ENCODE measurements at regions of chr15 and their contacts with region 1.

Region 1: GRCh38 chr15:91055548-91056331 is 33.3 kb upstream of the VPS33B start:
- DNase-seq: peak; percentile 64
- CTCF ChIP-seq: peak; percentile 77

Region 2: GRCh38 chr15:90869601-90870353 is 186.0 kb before region 1 on chr15:
- CTCF ChIA-PET with region 1: no interaction called
- POLR2A ChIA-PET with region 1: no interaction called
- DNase-seq: no peak
- CTCF ChIP-seq: no peak

Region 3: GRCh38 chr15:91032919-91033803 is 22.6 kb before region 1 on chr15:
- CTCF ChIA-PET with region 1: interaction called, 17 read pairs
- POLR2A ChIA-PET with region 1: no interaction called
- DNase-seq: peak; percentile 59
- CTCF ChIP-seq: peak; percentile 86

Region 4: GRCh38 chr15:91068966-91069365 is 13.2 kb after region 1 on chr15:
- CTCF ChIA-PET with region 1: interaction called, 20 read pairs
- POLR2A ChIA-PET with region 1: no interaction called
- DNase-seq: no peak
- CTCF ChIP-seq: no peak

Region 5: GRCh38 chr15:91110407-91110806 is 54.7 kb after region 1 on chr15:
- CTCF ChIA-PET with region 1: interaction called, 12 read pairs
- POLR2A ChIA-PET with region 1: no interaction called
- DNase-seq: no peak
- CTCF ChIP-seq: no peak

Region 6: GRCh38 chr15:91208371-91208770 is 152.6 kb after region 1 on chr15:
- CTCF ChIA-PET with region 1: interaction called, 13 read pairs
- POLR2A ChIA-PET with region 1: no interaction called
- DNase-seq: no peak
- CTCF ChIP-seq: no peak

Region 7: DNA sequence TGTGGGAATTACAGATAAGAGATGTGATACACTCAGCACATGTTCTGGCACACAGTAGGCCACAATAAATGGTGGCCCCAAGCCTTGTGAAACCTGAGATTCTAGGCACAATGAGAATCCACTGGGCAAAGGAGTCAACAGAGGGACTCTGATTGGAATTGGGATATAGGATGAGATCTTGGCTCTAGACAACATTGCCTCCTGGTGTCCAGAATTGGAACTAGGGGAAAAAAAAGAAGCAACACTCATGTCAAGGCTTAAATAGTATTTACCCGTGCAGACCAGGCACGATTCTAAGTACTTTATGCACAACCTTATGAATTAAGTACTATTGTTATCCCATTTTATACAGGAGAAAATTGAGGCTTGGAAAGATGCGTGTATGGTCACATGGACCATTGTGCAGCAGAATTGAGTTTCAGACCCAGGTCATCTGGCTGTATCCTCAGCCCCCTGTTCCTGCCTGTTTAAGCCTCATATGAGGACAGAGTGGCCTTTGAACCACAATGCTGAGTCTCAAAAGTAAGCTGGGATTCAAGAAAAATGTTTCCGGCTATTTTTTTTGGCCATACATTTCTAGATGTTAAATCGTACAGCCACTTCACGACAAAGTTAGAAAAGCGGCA is 169.1 kb after region 1 on chr15:
- CTCF ChIA-PET with region 1: interaction called, 102 read pairs
- POLR2A ChIA-PET with region 1: no interaction called
- DNase-seq: peak; percentile 54
- CTCF ChIP-seq: peak; percentile 70

Region 8: DNA sequence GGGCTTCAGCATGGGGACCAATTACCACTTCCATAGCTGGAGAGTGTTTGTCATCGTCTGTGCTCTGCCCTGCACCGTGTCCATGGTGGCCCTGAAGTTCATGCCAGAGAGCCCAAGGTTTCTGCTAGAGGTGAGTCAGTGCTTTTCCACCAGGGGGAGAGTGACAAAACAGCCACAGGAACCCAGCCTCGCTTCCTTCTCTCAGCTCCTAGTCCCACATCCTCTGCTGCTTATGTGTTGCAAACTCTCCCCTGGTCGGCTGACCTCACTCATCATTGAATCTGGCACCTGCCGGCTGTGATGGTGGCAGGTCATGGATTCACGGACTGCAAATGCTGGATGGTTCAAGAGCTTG is 202.7 kb after region 1 on chr15:
- CTCF ChIA-PET with region 1: interaction called, 20 read pairs
- POLR2A ChIA-PET with region 1: no interaction called
- DNase-seq: no peak
- CTCF ChIP-seq: no peak

Measured in GM10248 (cell line).